Activated CD8-positive, alpha-beta T cell treated with anti-CD3 and anti-CD28 coated beads, Interleukin-2, amount 10 ng/mL, durations not matched to agents 7 days and 5 days (primary cell): ENCODE measurements at regions of chr16 and their contacts with region 1.

Region 1: GRCh38 chr16:29641561-29641960 is 21.5 kb upstream of the SPN start:
- DNase-seq: no peak
- ATAC-seq: peak; percentile 50
- H3K4me3 Mint-ChIP-seq: peak overlapping the region; percentile 68
- H3K27ac Mint-ChIP-seq: peak overlapping the region; percentile 88
- H3K4me1 Mint-ChIP-seq: peaks cover 50% of the 10 kb centered on the region
- H3K27me3 Mint-ChIP-seq: no peaks in the 10 kb centered on the region

Region 2: GRCh38 chr16:29664091-29664921 is 22.7 kb after region 1 on chr16:
- CTCF ChIA-PET with region 1: interaction called, 32 read pairs
- POLR2A ChIA-PET with region 1: interaction called, 11 read pairs
- DNase-seq: peak; percentile 61
- ATAC-seq: peak; percentile 23
- H3K4me3 Mint-ChIP-seq: peak overlapping the region; percentile 96
- H3K27ac Mint-ChIP-seq: peak overlapping the region; percentile 97
- H3K4me1 Mint-ChIP-seq: peaks cover 50% of the 10 kb centered on the region
- H3K27me3 Mint-ChIP-seq: no peaks in the 10 kb centered on the region

Region 3: DNA sequence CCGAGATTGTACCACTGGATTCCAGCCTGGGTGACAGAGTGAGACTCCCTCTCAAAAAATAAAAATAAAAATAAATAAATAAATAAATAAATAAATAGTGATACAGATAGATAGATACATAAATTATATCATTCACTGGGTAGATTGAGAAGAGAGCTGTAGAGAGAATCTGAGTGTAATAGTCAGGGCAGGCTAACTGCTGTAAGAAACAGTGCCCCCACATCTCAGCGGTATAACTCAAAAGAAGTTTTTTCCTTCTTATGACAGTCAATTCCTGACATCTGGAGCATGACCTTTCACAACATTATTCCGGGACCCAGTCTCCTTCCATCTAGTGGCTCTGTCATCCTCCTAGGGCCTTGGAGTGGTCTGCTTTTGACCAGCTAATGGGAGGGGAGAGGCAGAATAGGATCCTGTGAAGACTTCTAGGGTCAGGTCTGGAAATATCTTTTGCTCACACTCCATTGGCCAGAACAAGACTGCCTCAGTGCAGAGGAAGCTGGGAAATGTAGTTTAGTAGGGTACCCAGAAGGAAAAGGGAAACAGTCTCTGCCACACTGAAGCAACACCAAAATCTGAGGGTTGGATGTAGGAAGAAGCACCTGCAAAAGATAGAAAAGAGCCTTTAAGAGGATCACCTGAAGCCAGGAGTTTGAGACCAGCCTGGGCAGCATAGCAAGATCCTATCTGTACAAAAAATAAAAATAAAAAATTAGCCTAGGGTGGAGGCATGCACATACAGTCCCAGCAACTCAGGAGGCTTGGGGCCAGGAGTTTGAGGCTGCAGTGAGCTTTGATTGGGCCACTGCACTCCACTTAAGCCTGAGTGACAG is 34.5 kb after region 1 on chr16:
- CTCF ChIA-PET with region 1: interaction called, 13 read pairs
- POLR2A ChIA-PET with region 1: interaction called, 3 read pairs
- DNase-seq: peak; percentile 37
- ATAC-seq: peak; percentile 65
- H3K4me3 Mint-ChIP-seq: no peak overlapping the region
- H3K27ac Mint-ChIP-seq: no peak overlapping the region
- H3K4me1 Mint-ChIP-seq: peaks cover 41% of the 10 kb centered on the region
- H3K27me3 Mint-ChIP-seq: no peaks in the 10 kb centered on the region

Region 4: DNA sequence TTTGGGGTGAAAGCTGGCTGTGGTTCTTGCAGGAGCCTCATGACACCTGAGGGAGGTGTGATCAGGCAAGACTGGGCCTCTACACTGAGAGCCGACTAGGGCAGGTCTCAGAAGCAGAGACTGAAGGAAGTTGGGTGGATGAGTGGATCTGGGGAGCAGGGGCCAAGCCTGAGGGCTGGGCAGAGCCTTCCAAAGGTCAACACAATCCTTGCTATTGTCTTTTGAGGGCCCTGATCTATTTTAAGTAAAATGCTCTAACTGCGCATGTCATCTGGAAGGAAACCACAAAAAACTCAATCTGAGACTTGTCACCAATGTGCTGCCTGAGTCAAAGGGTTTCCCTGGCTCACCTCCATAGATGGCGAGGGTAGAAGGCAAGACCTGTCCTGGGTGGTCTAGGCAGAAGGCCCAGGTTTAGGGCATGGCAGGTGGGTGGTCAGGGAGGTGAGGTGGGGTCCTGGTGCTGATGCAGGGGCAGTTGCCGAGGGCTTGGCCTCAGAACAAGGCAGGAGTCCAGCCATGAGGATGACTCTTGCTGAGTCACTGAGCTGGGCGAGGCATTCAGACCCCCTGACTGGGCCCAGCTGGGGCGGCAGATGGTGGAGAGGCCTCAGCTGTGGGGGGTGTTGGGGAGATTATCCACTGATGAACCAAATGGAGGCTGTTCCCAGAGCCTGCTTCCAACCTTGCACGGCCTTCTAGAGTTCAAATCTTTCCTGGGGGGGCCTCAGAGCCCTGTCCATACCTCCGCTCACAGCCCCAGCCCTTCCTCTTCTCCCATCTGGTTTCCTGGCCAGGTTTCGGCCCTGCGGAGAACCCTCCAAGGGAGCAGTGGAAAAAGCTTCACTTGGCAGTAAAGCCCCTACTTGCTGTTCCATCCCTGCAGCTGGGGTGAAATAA is 183.8 kb after region 1 on chr16:
- CTCF ChIA-PET with region 1: no interaction called
- POLR2A ChIA-PET with region 1: no interaction called
- DNase-seq: peak; percentile 62
- ATAC-seq: peak; percentile 35
- H3K4me3 Mint-ChIP-seq: peak overlapping the region; percentile 13
- H3K27ac Mint-ChIP-seq: peak overlapping the region; percentile 74
- H3K4me1 Mint-ChIP-seq: peaks cover 62% of the 10 kb centered on the region
- H3K27me3 Mint-ChIP-seq: no peaks in the 10 kb centered on the region